Dendritic cell treated with granulocyte-macrophage colony-stimulating factor and Interleukin-4, amounts not matched to agents 40 ng/mL and 50 ng/mL, for 4 days (primary cell): ENCODE measurements at regions of chr10 and their contacts with region 1.

Region 1: DNA sequence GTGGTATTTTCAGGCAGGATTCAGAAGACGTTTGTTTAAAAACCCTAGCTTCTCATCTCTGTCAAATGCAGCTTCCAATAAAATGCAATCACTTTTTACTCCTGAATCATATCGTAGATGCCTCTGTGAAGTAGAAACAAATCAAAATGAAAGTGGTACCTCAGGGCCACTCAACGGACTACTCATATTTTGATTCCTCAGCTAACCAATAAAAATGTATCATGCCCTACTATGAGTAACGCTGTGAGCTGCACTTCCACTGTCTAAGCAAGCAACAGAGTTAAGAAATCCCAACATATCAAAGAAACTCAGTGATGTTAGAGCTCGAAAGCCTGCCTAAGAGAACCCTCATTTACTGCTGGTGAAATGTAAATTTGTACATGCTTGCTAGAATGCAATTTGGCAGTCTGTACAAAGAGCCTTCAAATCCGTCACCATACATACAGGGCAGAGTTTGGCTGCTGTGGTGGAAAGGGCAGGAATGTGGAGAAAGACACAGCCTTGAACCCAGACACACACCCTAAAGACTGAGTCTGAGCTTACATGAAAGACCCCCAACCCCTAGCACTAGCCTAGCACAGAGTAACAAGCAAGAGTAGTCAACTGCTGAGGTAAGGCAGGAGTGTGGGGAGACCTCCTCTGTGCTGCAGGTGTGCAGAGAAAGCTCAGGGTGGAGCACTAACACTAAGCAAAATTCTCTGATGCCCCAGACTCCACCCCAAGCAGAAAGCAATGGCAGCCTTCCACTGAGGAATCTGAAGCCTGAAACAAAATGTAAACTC is 151.5 kb downstream of the ANK3 start:
- H3K4me3 Mint-ChIP-seq: no peak overlapping the region
- H3K27ac Mint-ChIP-seq: no peak overlapping the region
- H3K4me1 Mint-ChIP-seq: peaks cover 37% of the 10 kb centered on the region
- H3K27me3 Mint-ChIP-seq: no peaks in the 10 kb centered on the region

Region 2: GRCh38 chr10:59991661-59992060 is 246.5 kb before region 1 on chr10:
- intact Hi-C with region 1: no loop called
- H3K4me3 Mint-ChIP-seq: peak overlapping the region; percentile 72
- H3K27ac Mint-ChIP-seq: peak overlapping the region; percentile 74
- H3K4me1 Mint-ChIP-seq: peaks cover 8% of the 10 kb centered on the region
- H3K27me3 Mint-ChIP-seq: no peaks in the 10 kb centered on the region

Region 3: DNA sequence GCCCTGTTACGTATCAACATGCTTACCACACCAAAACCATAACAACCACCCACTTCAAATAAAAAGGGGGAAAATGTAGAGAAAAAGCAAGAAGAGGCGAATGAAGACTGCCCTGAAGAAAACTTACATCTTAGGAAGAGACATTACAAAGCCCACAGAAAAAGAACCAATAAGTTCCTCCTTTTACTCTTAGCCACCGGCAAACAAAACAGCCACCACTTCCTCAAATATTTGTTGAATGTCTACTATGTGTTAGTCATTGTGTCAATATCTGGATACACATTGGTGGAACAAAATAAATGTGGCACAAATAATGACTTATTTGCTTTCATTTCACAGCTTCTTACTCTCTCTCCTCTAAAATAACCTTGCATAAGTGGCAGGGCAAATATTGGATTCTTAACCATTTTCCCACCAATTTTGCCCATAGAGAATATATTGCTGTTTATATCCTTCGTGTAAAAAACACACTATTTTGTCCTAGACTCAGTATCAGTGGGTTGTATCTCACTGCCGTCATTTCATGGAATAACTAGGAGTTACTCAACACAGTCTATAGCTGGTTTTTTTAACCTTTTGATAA is 44.7 kb after region 1 on chr10:
- intact Hi-C with region 1: loop called (anchors 2 kb)
- H3K4me3 Mint-ChIP-seq: no peak overlapping the region
- H3K27ac Mint-ChIP-seq: no peak overlapping the region
- H3K4me1 Mint-ChIP-seq: peaks cover 12% of the 10 kb centered on the region
- H3K27me3 Mint-ChIP-seq: no peaks in the 10 kb centered on the region

Region 4: DNA sequence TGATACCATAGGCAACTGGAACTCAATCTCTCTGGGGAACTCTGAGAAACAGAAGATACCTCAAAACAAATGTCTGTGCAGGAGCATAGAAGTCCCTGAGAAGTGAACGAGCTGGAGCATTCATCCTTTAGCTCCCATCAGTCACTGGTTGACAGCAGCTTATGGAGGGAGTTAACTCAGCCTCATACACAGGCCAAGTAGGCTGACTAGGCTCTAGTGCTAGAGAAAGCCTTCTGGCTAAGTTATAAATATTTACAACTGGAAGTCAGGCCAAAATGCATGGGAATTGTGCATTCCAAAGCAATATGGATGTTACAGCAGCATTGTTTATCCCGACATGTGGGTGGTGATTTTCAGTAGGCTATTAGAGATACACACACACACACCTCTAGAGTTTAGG is 85.0 kb after region 1 on chr10:
- intact Hi-C with region 1: no loop called
- H3K4me3 Mint-ChIP-seq: no peak overlapping the region
- H3K27ac Mint-ChIP-seq: no peak overlapping the region
- H3K4me1 Mint-ChIP-seq: no peaks in the 10 kb centered on the region
- H3K27me3 Mint-ChIP-seq: no peaks in the 10 kb centered on the region

Region 5: DNA sequence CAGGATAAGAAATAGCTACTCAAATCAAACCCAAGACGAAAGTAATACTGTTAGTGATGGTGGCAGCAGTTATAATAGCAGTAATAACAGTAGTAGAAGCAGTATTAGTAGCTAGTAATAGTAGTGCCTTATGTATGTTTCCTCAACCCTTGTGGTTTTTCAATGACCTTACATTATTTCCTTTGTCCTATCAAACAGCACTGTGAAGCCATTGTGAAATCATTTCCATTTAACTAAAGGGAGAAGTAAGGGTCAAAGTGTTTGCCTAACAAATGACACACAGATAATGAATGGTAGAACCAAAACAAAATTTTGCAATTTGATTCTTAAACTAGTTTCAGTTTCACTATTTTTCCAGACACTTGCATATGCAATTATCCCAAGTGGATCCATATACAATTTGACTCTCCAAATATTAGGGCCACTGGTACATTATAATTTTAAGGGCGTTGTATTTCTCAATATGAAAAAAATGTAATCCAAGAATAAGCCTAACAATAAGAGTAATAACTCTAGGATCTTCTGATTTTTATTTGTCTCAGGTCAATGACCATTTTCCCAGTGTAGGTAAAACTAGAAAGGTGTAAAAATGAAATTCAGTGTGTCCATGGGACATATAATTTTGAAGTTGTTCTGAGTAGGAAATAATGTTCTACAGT is 1248.7 kb after region 1 on chr10:
- intact Hi-C with region 1: loop called (anchors 10 kb)
- H3K4me3 Mint-ChIP-seq: no peak overlapping the region
- H3K27ac Mint-ChIP-seq: no peak overlapping the region
- H3K4me1 Mint-ChIP-seq: peaks cover 25% of the 10 kb centered on the region
- H3K27me3 Mint-ChIP-seq: peaks cover 20% of the 10 kb centered on the region